ENCODE measurements at regions of chr3 and their contacts with region 1.

Region 1: DNA sequence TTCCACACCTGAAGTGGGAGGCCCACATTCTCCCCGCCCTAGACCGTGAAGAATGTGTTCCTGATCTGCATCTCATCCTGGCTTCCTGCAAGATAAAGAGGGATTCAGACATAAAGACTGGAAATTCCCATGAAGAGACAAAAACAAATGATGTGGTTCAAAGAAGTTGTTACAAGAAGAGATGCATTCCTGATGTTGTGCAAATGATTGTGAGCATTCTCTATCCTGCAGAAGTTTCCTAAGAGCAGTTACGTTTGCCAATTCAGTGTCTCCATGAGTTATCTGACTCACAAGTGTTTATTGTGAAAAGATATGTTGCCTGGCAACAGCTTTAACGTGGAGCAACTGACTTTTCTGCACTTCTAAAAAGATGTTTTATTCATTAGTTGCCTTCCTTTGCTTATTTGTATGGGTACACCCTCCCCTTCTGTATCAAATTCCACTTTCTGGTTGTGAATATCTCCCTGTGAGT is 107.8 kb downstream of the ZIC4 start:
- DNase-seq: no peak
- ATAC-seq: no peak
- H3K4me3 ChIP-seq: no peak overlapping the region
- H3K27ac ChIP-seq: no peak overlapping the region
- H3K4me1 ChIP-seq: no peaks in the 10 kb centered on the region
- H3K27me3 ChIP-seq: no peaks in the 10 kb centered on the region
- CTCF ChIP-seq: no peak
- POLR2A ChIP-seq: no peak

Region 2: DNA sequence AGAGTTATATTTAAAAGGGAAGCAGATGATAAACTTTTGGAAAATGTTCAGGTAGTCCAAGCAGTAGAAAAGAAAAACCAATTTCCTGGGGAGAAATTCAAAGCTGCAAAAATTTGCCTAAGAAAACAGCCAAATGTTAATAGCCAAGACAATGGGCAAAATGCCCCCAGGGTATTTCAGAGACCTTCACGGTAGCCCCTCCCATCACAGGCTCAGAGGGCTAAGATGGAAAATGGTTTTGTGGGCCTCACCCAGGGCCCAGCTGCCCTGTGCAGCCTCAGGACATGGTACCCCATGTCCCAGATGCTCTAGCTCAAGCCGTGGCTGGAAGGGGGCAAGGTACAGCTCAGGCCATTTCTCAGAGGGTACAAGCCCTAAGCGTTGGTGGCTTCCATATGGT is 283.2 kb before region 1 on chr3:
- intact Hi-C with region 1: loop called (anchors 10 kb)
- DNase-seq: no peak
- ATAC-seq: no peak
- H3K4me3 ChIP-seq: no peak overlapping the region
- H3K27ac ChIP-seq: no peak overlapping the region
- H3K4me1 ChIP-seq: no peaks in the 10 kb centered on the region
- H3K27me3 ChIP-seq: no peaks in the 10 kb centered on the region
- CTCF ChIP-seq: no peak
- POLR2A ChIP-seq: no peak

Region 3: GRCh38 chr3:147377412-147378367 is 79.1 kb after region 1 on chr3:
- intact Hi-C with region 1: no loop called
- DNase-seq: no peak
- ATAC-seq: no peak
- H3K4me3 ChIP-seq: no peak overlapping the region
- H3K27ac ChIP-seq: no peak overlapping the region
- H3K4me1 ChIP-seq: no peaks in the 10 kb centered on the region
- H3K27me3 ChIP-seq: peaks cover 0 to 16% of the 10 kb centered on the region in 2 donors
- CTCF ChIP-seq: no peak
- POLR2A ChIP-seq: no peak